CD4-positive, alpha-beta T cell (primary cell): ENCODE measurements at regions of chr10 and their contacts with region 1.

Region 1: GRCh38 chr10:32271617-32272016 is 75.3 kb downstream of the EPC1 start:
- DNase-seq: no peak
- ATAC-seq: no peak
- H3K4me3 ChIP-seq: no peak overlapping the region
- H3K4me3 Mint-ChIP-seq: no peak overlapping the region
- H3K27ac ChIP-seq: no peak overlapping the region
- H3K27ac Mint-ChIP-seq: no peak overlapping the region
- H3K4me1 ChIP-seq: no peaks in the 10 kb centered on the region
- H3K4me1 Mint-ChIP-seq: peaks cover 12% of the 10 kb centered on the region
- H3K27me3 ChIP-seq: no peaks in the 10 kb centered on the region
- H3K27me3 Mint-ChIP-seq: no peaks in the 10 kb centered on the region
- CTCF ChIP-seq: no peak

Region 2: DNA sequence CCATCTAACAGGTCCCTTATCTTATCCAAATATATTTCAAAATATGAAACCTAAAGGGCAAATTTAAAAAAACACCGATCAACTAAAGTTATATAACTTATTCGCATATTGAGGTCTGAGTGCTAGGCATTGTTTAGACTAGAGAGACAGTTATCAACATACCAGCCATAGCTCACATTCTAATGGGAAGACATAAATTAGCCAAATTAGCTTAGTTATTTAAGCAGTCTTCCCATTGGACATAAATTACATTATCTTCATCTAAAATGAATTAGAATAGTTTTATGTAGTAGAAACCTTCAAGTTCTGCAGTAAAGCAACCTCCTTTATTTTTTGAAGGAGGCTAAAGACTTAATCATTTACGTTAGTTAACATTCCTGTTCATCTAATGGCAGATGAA is 232.8 kb before region 1 on chr10:
- CTCF ChIA-PET with region 1: no interaction called
- POLR2A ChIA-PET with region 1: no interaction called
- intact Hi-C with region 1: loop called in 1 of 2 experiments (anchors 10 kb)
- DNase-seq: no peak
- ATAC-seq: no peak
- H3K4me3 ChIP-seq: no peak overlapping the region
- H3K4me3 Mint-ChIP-seq: no peak overlapping the region
- H3K27ac ChIP-seq: no peak overlapping the region
- H3K27ac Mint-ChIP-seq: no peak overlapping the region
- H3K4me1 ChIP-seq: peaks cover 16% of the 10 kb centered on the region
- H3K4me1 Mint-ChIP-seq: peaks cover 37% of the 10 kb centered on the region
- H3K27me3 ChIP-seq: no peaks in the 10 kb centered on the region
- H3K27me3 Mint-ChIP-seq: no peaks in the 10 kb centered on the region
- CTCF ChIP-seq: no peak